HCT116 (cell line): ENCODE measurements at regions of chr12 and their contacts with region 1.

Region 1: DNA sequence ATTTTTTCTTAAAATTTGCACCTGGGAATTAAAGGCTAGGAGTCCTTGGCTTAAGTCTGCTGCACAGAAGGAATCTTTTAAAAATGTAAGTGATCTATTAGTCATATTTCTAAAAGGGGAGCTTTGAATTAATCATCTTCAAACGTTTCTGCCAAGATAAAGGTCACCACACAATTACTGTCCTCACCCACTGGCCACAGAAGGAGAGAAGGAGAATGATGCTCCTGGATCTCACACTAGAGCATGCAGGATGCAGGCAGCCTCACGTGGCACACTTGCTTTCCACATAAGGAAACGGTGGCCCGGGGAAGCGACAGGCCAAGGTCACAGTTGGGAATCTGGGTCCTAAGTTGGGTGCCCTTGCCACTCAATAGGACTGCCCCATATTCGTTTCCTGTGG is 16.9 kb downstream of the PLEKHG7 start:
- DNase-seq: no peak
- ATAC-seq: no peak
- H3K4me3 ChIP-seq: no peak overlapping the region
- H3K27ac ChIP-seq: no peak overlapping the region
- H3K4me1 ChIP-seq: peaks cover 0 to 3% of the 10 kb centered on the region in 2 experiments; a peak in 1 of 4 replicates
- H3K27me3 ChIP-seq: no peaks in the 10 kb centered on the region
- CTCF ChIP-seq: no peak
- POLR2A ChIP-seq: no peak
- RAD21 ChIP-seq: no peak

Region 2: GRCh38 chr12:91753649-91754048 is 966.0 kb before region 1 on chr12:
- CTCF ChIA-PET with region 1: no interaction called
- POLR2A ChIA-PET with region 1: no interaction called
- RAD21 ChIA-PET with region 1: no interaction called
- intact Hi-C with region 1: no loop called
- DNase-seq: no peak
- ATAC-seq: no peak
- H3K4me3 ChIP-seq: no peak overlapping the region
- H3K27ac ChIP-seq: no peak overlapping the region
- H3K4me1 ChIP-seq: no peaks in the 10 kb centered on the region
- H3K27me3 ChIP-seq: no peaks in the 10 kb centered on the region
- CTCF ChIP-seq: no peak
- POLR2A ChIP-seq: no peak
- RAD21 ChIP-seq: no peak

Region 3: DNA sequence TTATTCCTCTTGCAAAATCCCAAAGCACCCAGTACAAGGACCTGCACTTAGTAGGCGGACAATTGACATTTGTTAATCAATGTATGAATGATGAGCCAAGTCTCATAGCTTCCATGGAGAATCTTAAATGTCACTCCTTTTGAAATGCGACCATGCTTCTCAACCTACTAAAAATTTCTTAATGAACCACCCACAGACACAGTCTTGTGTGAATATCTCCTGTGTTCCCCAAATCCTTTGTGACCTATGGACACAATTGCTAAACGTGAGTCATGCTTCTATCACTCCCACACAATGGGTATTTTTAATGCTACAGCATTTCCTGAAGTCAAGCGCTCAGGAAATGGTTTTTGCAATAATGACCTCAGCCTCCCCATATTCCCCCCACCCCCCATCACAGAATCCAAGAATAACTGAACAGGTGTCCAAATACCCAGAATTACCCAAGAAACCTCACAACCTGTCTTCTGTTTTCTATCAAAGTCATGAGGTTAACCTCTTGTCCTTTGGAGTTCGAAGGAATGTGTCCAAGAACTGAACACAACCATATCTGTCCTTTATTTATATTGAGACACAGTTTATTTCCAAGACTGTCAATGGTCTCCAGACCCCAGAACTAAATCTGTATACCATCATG is 180.4 kb before region 1 on chr12:
- CTCF ChIA-PET with region 1: no interaction called
- POLR2A ChIA-PET with region 1: no interaction called
- RAD21 ChIA-PET with region 1: no interaction called
- intact Hi-C with region 1: no loop called
- DNase-seq: peak; percentile 47
- ATAC-seq: peak; percentile 77
- H3K4me3 ChIP-seq: peak overlapping the region in 1 of 2 experiments; percentile 15; a peak in 1 of 4 replicates
- H3K27ac ChIP-seq: no peak overlapping the region
- H3K4me1 ChIP-seq: peaks cover 8 to 25% of the 10 kb centered on the region in 2 experiments; a peak in 3 of 4 replicates
- H3K27me3 ChIP-seq: no peaks in the 10 kb centered on the region
- CTCF ChIP-seq: no peak
- POLR2A ChIP-seq: no peak
- RAD21 ChIP-seq: peak; percentile 20; the same call in 1 of the 2 replicates

Region 4: DNA sequence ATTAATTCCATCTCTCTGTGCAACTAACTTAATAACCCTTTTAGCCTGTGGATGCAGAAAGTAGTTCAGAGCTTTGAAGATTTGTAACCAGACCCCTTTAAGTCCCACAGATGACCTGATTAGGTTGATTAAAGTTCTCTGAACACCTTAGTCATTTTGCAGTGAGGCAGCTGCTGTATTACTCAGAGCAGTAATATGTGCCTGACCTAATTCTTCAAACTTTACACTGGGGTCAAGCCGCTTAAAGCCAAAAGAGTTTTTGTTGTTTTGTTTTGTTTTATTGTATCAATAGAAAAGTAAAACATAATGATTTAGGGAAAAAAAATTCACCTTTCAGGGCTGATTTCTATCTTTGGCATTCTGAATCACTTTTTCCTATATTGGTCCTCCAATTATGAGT is 95.4 kb before region 1 on chr12:
- CTCF ChIA-PET with region 1: no interaction called
- POLR2A ChIA-PET with region 1: no interaction called
- RAD21 ChIA-PET with region 1: no interaction called
- intact Hi-C with region 1: no loop called
- DNase-seq: no peak
- ATAC-seq: peak; percentile 58; the same call in 1 of the 2 replicates
- H3K4me3 ChIP-seq: no peak overlapping the region
- H3K27ac ChIP-seq: no peak overlapping the region
- H3K4me1 ChIP-seq: peaks cover 0 to 9% of the 10 kb centered on the region in 2 experiments; a peak in 2 of 4 replicates
- H3K27me3 ChIP-seq: no peaks in the 10 kb centered on the region
- CTCF ChIP-seq: no peak
- POLR2A ChIP-seq: no peak
- RAD21 ChIP-seq: no peak

Region 5: GRCh38 chr12:92912052-92912451 is 192.4 kb after region 1 on chr12:
- CTCF ChIA-PET with region 1: no interaction called
- POLR2A ChIA-PET with region 1: no interaction called
- RAD21 ChIA-PET with region 1: no interaction called
- intact Hi-C with region 1: no loop called
- DNase-seq: no peak
- ATAC-seq: no peak
- H3K4me3 ChIP-seq: no peak overlapping the region
- H3K27ac ChIP-seq: no peak overlapping the region
- H3K4me1 ChIP-seq: no peaks in the 10 kb centered on the region
- H3K27me3 ChIP-seq: no peaks in the 10 kb centered on the region
- CTCF ChIP-seq: no peak
- POLR2A ChIP-seq: no peak
- RAD21 ChIP-seq: no peak

Region 6: GRCh38 chr12:93008044-93008778 is 288.5 kb after region 1 on chr12:
- CTCF ChIA-PET with region 1: no interaction called
- POLR2A ChIA-PET with region 1: no interaction called
- RAD21 ChIA-PET with region 1: no interaction called
- intact Hi-C with region 1: loop called (anchors 5 kb)
- DNase-seq: no peak
- ATAC-seq: no peak
- H3K4me3 ChIP-seq: no peak overlapping the region
- H3K27ac ChIP-seq: no peak overlapping the region
- H3K4me1 ChIP-seq: peaks cover 4 to 9% of the 10 kb centered on the region in 2 experiments; a peak in 3 of 4 replicates
- H3K27me3 ChIP-seq: no peaks in the 10 kb centered on the region
- CTCF ChIP-seq: no peak
- POLR2A ChIP-seq: no peak
- RAD21 ChIP-seq: no peak